Sigmoid colon (tissue), 7 donors: ENCODE measurements at regions of chr21 and their contacts with region 1.

Region 1: GRCh38 chr21:43866260-43866629 is 1.2 kb downstream of the AGPAT3 start:
- DNase-seq: peak; percentile 83
- H3K4me3 ChIP-seq: peak overlapping the region; percentile 74 to 96 (median 94)
- H3K27ac ChIP-seq: peak overlapping the region; percentile 94 to 99 (median 96)
- H3K4me1 ChIP-seq: peaks cover 0 to 45% (median 35%) of the 10 kb centered on the region in 4 donors
- H3K27me3 ChIP-seq: no peaks in the 10 kb centered on the region
- CTCF ChIP-seq: no peak
- EP300 ChIP-seq: no peak
- POLR2A ChIP-seq: no peak

Region 2: GRCh38 chr21:43585924-43586424 is 280.3 kb before region 1 on chr21:
- intact Hi-C with region 1: no loop called
- DNase-seq: peak; percentile 84
- H3K4me3 ChIP-seq: no peak overlapping the region
- H3K27ac ChIP-seq: peak overlapping the region; percentile 53 to 86 (median 62)
- H3K4me1 ChIP-seq: peaks cover 0 to 23% (median 22%) of the 10 kb centered on the region in 4 donors
- H3K27me3 ChIP-seq: no peaks in the 10 kb centered on the region
- CTCF ChIP-seq: no peak
- EP300 ChIP-seq: peak in 2 of 4 donors; percentile 62 to 66
- POLR2A ChIP-seq: no peak

Region 3: GRCh38 chr21:43789276-43790009 is 76.8 kb before region 1 on chr21 and contains the start of gene RRP1:
- intact Hi-C with region 1: loop called (anchors 1 kb)
- DNase-seq: peak; percentile 94
- H3K4me3 ChIP-seq: peak within 1 kb of the TSS; percentile 68 to 92 (median 80)
- H3K27ac ChIP-seq: peak within 1 kb of the TSS; percentile 87 to 93 (median 90)
- H3K4me1 ChIP-seq: peaks cover 0 to 21% (median 15%) of the 10 kb centered on the region in 4 donors
- H3K27me3 ChIP-seq: no peaks in the 10 kb centered on the region
- CTCF ChIP-seq: peak; percentile 43 to 100 (median 94)
- EP300 ChIP-seq: no peak
- POLR2A ChIP-seq: peak; percentile 44 to 83
- total RNA-seq, gene RRP1: 10.3 to 16.1 (median 11.8) TPM

Region 4: GRCh38 chr21:43816611-43817478 is 49.4 kb before region 1 on chr21:
- intact Hi-C with region 1: no loop called
- DNase-seq: no peak
- H3K4me3 ChIP-seq: no peak overlapping the region
- H3K27ac ChIP-seq: no peak overlapping the region
- H3K4me1 ChIP-seq: no peaks in the 10 kb centered on the region
- H3K27me3 ChIP-seq: peaks cover 0 to 11% (median 0%) of the 10 kb centered on the region in 3 donors
- CTCF ChIP-seq: no peak
- EP300 ChIP-seq: no peak
- POLR2A ChIP-seq: no peak

Region 5: GRCh38 chr21:43921979-43922945 is 56.0 kb after region 1 on chr21:
- intact Hi-C with region 1: loop called (anchors 5 kb)
- DNase-seq: no peak
- H3K4me3 ChIP-seq: no peak overlapping the region
- H3K27ac ChIP-seq: peak overlapping the region in 3 of 4 donors; percentile 2 to 21 (median 4)
- H3K4me1 ChIP-seq: peaks cover 0 to 48% (median 36%) of the 10 kb centered on the region in 4 donors
- H3K27me3 ChIP-seq: no peaks in the 10 kb centered on the region
- CTCF ChIP-seq: no peak
- EP300 ChIP-seq: no peak
- POLR2A ChIP-seq: no peak

Region 6: DNA sequence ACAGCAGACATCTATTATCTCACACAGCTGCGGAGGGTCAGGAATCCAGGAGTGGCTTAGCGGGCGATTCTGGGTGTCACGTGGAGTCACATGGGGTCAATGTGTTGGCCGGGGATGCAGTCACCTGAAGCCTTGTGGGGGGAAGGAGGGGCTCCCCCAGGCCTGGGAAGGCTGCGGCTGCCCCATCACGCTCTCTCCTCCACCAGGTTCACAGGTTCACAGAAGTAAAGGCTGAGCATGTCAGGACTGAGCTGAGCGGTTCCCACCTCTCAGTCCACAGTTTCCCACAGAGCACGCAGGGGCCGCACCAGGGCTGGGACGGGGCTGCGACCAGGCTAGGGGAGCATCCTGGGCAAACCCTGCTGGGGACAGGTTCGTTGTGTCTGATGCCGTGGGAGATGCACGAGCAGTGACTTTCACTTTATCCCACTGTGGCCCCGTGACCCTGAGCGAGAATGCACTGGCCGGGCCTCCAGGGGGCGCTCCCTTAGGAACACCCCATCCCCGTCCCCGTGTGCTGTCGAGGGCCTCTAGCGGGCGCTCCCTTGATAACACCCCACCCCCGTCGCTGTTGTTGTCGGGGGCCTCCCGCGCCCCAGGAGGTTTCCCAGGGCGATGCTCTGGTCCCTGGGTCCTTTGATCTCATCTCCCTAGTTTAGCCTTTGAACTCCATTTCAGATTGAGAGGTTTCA is 72.7 kb after region 1 on chr21:
- intact Hi-C with region 1: loop called (anchors 5 kb)
- DNase-seq: peak; percentile 87
- H3K4me3 ChIP-seq: peak overlapping the region in 3 of 4 donors; percentile 31 to 39 (median 39)
- H3K27ac ChIP-seq: peak overlapping the region in 3 of 4 donors; percentile 50 to 58 (median 57)
- H3K4me1 ChIP-seq: peaks cover 0 to 34% (median 24%) of the 10 kb centered on the region in 4 donors
- H3K27me3 ChIP-seq: no peaks in the 10 kb centered on the region
- CTCF ChIP-seq: peak; percentile 79 to 86 (median 86)
- EP300 ChIP-seq: no peak
- POLR2A ChIP-seq: no peak

Region 7: DNA sequence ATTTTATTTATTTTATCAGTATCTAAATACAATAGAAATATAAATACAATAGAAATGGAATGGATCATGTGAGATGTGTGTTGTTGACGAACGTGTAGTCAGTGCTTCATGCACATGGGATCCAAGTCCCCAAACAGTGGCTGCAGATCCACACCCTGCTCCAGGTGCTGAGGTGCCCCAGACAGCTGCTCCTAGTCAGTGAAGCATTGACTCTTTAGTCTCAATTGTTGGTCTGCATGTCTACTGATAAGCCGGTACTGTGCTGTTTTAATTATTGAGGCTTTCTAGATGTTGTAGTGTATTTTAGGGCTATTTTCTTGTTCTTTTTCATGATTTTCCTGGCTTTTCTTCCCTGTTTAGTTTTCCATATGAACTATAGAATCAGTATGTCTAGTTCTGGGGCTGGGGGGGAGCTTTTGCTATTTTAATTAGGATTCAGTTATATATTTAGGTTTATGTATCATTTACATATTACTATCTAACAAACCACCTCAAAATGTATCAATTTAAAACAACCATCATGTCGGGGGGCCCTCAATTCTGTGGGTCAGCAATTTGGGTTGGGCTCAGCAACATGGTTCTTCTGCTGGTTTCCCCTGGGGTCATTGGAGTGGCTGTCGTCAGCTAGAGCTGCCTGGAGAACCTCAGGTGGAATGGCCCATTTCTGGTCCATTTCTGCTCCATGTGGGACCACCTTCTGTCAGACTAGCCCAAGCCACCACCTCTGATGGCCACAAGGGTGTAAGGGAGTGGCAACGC is 82.7 kb after region 1 on chr21:
- intact Hi-C with region 1: no loop called
- DNase-seq: no peak
- H3K4me3 ChIP-seq: no peak overlapping the region
- H3K27ac ChIP-seq: no peak overlapping the region
- H3K4me1 ChIP-seq: peaks cover 0 to 11% (median 3%) of the 10 kb centered on the region in 4 donors
- H3K27me3 ChIP-seq: no peaks in the 10 kb centered on the region
- CTCF ChIP-seq: no peak
- EP300 ChIP-seq: no peak
- POLR2A ChIP-seq: no peak

Region 8: DNA sequence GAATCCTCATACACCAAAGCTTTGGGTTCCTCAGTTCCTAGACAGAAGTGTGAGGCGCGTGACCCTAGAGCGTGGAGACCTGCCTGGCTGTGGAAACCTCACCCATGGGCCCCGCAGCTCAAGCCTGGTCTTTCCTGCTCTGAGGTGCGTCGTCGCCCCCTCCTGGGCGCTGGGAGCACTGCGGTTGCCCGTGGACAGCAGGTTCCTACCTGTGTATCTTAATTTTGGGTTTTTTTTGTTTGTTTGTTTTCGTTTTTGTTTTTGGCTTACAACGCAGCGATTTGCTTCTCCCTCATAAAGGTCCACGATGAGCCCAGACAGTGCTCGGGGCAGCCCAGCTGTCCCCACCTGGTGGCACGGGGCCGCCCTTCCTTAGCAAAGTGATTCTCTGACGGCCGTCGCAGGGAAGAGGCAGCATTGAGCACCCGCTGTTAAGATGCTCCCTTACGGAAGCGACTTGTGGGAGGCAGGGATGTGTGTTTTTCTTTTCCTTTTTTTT is 109.3 kb after region 1 on chr21:
- intact Hi-C with region 1: loop called (anchors 5 kb)
- DNase-seq: peak; percentile 87
- H3K4me3 ChIP-seq: no peak overlapping the region
- H3K27ac ChIP-seq: no peak overlapping the region
- H3K4me1 ChIP-seq: peaks cover 0 to 7% (median 3%) of the 10 kb centered on the region in 4 donors
- H3K27me3 ChIP-seq: no peaks in the 10 kb centered on the region
- CTCF ChIP-seq: peak; percentile 84 to 96 (median 91)
- EP300 ChIP-seq: no peak
- POLR2A ChIP-seq: no peak

Region 9: GRCh38 chr21:44299458-44300261 is 433.4 kb after region 1 on chr21 and contains the start of gene PFKL:
- intact Hi-C with region 1: loop called (anchors 5 kb)
- DNase-seq: peak; percentile 81
- H3K4me3 ChIP-seq: peak within 1 kb of the TSS; percentile 80 to 96 (median 92)
- H3K27ac ChIP-seq: peak within 1 kb of the TSS; percentile 89 to 96 (median 92)
- H3K4me1 ChIP-seq: peaks cover 0 to 63% (median 51%) of the 10 kb centered on the region in 4 donors
- H3K27me3 ChIP-seq: peaks cover 0 to 25% (median 25%) of the 10 kb centered on the region in 3 donors
- CTCF ChIP-seq: no peak
- EP300 ChIP-seq: no peak
- POLR2A ChIP-seq: peak in 1 of 2 donors; percentile 33
- total RNA-seq, gene PFKL: 38.0 to 69.8 (median 50.4) TPM